ENCODE measurements at regions of chr10 and their contacts with region 1.

Region 1: DNA sequence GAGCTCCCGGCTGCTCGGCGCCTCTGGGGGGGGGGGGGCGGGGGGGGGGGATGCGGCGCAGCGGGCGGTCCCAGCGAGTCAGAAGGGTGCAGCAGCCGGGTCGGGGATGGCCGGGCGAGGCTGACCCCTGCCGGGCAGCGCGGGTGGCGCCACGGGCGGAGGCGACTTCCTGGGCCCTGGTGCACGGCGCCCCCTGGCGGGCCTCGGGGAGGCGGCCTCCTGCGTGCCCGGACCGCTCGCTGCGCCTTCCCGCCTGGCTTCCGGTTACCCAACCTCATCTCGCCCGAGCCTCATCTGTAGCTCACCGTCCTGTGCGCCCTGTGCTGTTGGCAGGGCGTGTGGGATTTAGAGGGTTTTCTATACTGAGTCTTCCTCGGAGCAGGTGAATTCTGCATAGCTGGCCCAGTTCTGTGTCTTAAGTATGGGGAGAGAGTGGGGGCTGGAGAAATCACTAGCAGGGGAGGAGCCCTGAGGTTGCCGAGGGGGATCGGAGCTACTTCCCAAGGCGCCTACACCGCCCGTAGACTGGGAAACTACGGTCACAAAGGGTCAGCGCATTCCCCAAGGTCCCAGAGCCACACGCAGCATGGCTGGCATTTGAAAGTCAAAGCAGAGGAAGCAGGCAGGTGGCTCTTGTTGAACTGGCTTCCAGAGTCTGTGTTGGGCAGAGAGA is 28.3 kb upstream of the WDFY4 start:
- DNase-seq: peak; percentile 36
- H3K4me3 ChIP-seq: peak overlapping the region; percentile 62
- H3K27me3 ChIP-seq: peaks cover 4% of the 10 kb centered on the region
- CTCF ChIP-seq: peak; percentile 59

Region 2: DNA sequence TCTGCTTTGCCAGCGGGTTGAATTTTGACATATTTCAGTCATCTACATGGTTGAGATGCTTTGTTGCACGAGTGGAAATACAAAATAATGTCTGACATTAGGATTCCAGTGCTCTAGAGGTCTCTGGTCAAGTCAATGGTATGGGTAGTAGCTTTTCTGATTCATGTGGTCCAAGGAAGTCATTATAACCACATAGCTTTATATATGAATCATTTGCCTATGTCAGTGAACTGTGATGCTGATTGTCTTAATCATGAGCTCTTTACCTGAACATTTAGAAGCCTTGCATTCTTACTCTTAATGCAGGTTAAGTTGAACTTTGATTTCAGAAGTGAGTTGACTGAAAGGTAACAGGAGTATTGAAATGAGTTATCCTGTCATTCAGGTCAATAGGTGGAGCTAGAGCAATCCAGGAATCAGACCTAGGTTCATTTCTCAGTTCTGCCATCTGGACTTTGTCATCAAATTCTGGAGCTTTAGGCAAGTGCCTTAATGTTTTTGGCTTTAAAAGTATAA is 346.6 kb before region 1 on chr10:
- CTCF ChIA-PET with region 1: interaction called, 18 read pairs
- POLR2A ChIA-PET with region 1: no interaction called
- DNase-seq: no peak
- H3K4me3 ChIP-seq: no peak overlapping the region
- H3K27me3 ChIP-seq: no peaks in the 10 kb centered on the region
- CTCF ChIP-seq: 0 out of 2 replicates have a peak, but pooled peaks have one; percentile 4

Region 3: DNA sequence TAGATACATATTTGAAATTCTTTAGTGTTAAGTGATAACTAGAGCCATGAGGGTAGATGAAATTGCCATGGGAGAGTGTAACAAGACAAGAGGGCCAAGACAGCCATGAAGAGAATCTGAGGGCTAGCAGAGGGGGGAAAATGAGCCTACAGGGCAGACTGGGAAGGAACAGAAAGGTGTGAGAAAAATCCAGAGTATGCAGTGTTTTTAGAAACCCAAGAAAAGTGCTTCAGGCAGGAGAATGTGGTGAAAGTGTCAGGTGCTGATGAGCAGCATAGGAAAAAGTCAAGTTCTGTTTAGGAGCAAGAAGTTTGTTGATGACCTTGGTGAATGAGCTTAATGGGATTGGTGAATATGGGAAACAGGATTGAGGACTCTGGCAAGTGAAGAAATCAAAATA is 286.8 kb before region 1 on chr10:
- CTCF ChIA-PET with region 1: interaction called, 139 read pairs
- POLR2A ChIA-PET with region 1: no interaction called
- DNase-seq: no peak
- H3K4me3 ChIP-seq: no peak overlapping the region
- H3K27me3 ChIP-seq: no peaks in the 10 kb centered on the region
- CTCF ChIP-seq: no peak

Region 4: GRCh38 chr10:48551861-48552591 is 104.4 kb before region 1 on chr10:
- CTCF ChIA-PET with region 1: interaction called, 739 read pairs
- POLR2A ChIA-PET with region 1: interaction called, 3 read pairs
- DNase-seq: no peak
- H3K4me3 ChIP-seq: no peak overlapping the region
- H3K27me3 ChIP-seq: no peaks in the 10 kb centered on the region
- CTCF ChIP-seq: peak; percentile 75

Region 5: DNA sequence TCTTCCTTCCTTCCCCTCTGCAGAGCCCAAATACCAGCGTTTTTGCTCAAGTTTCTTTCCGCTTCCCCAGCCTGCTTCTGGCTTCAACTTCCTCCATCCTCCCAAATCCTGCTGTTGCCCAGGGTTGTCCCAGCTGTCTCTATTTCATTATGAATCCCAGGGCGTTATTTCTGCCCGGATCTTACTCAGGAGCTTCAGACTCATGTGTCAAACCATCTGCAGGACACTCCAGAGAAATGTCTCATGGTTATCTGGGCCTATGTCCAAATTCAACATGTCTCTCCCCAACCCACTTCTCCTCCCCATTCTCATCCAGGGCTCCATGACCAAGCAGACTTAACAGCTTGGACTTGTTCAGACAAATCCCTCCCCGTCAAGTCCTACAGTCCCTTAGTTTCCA is 67.1 kb before region 1 on chr10:
- CTCF ChIA-PET with region 1: interaction called, 56 read pairs
- POLR2A ChIA-PET with region 1: no interaction called
- DNase-seq: peak; percentile 74
- H3K4me3 ChIP-seq: no peak overlapping the region
- H3K27me3 ChIP-seq: no peaks in the 10 kb centered on the region
- CTCF ChIP-seq: no peak

Region 6: GRCh38 chr10:48614481-48615390 is 41.6 kb before region 1 on chr10:
- CTCF ChIA-PET with region 1: interaction called, 155 read pairs
- POLR2A ChIA-PET with region 1: no interaction called
- DNase-seq: peak; percentile 50
- H3K4me3 ChIP-seq: no peak overlapping the region
- H3K27me3 ChIP-seq: no peaks in the 10 kb centered on the region
- CTCF ChIP-seq: peak; percentile 46

Region 7: GRCh38 chr10:48670978-48671913 is 14.9 kb after region 1 on chr10:
- CTCF ChIA-PET with region 1: interaction called, 20 read pairs
- POLR2A ChIA-PET with region 1: no interaction called
- DNase-seq: no peak
- H3K4me3 ChIP-seq: no peak overlapping the region
- H3K27me3 ChIP-seq: peaks cover 7% of the 10 kb centered on the region
- CTCF ChIP-seq: no peak